ENCODE measurements at regions of chr2 and their contacts with region 1.

Region 1: GRCh38 chr2:52416340-52416739 is 1351.3 kb upstream of the CHAC2 start:
- DNase-seq: peak in 1 of 2 donors; percentile 6
- H3K4me3 ChIP-seq: no peak overlapping the region
- H3K27ac ChIP-seq: no peak overlapping the region
- H3K4me1 ChIP-seq: no peaks in the 10 kb centered on the region
- H3K27me3 ChIP-seq: no peaks in the 10 kb centered on the region
- CTCF ChIP-seq: peak in 3 of 7 experiments; percentile 13 to 26 (median 13)
- EP300 ChIP-seq: no peak
- POLR2A ChIP-seq: no peak

Region 2: GRCh38 chr2:52976253-52976949 is 560.1 kb after region 1 on chr2:
- intact Hi-C with region 1: loop called (anchors 10 kb)
- DNase-seq: peak in 1 of 2 donors; percentile 33
- H3K4me3 ChIP-seq: no peak overlapping the region
- H3K27ac ChIP-seq: no peak overlapping the region
- H3K4me1 ChIP-seq: no peaks in the 10 kb centered on the region
- H3K27me3 ChIP-seq: no peaks in the 10 kb centered on the region
- CTCF ChIP-seq: peak in 2 of 7 experiments; percentile 20 to 27
- EP300 ChIP-seq: no peak
- POLR2A ChIP-seq: no peak

Measured in stomach (tissue), 19 donors.